Posterior vena cava (tissue), 2 donors: ENCODE measurements at regions of chr12 and their contacts with region 1.

Region 1: GRCh38 chr12:109995686-109996482 is at the start of gene GIT2:
- DNase-seq: peak; percentile 98
- total RNA-seq, gene GIT2: 44.9 to 48.0 TPM

Region 2: GRCh38 chr12:109504068-109504467 is 491.8 kb before region 1 on chr12:
- intact Hi-C with region 1: loop called in 1 of 2 experiments (anchors 5 kb)
- DNase-seq: no peak

Region 3: DNA sequence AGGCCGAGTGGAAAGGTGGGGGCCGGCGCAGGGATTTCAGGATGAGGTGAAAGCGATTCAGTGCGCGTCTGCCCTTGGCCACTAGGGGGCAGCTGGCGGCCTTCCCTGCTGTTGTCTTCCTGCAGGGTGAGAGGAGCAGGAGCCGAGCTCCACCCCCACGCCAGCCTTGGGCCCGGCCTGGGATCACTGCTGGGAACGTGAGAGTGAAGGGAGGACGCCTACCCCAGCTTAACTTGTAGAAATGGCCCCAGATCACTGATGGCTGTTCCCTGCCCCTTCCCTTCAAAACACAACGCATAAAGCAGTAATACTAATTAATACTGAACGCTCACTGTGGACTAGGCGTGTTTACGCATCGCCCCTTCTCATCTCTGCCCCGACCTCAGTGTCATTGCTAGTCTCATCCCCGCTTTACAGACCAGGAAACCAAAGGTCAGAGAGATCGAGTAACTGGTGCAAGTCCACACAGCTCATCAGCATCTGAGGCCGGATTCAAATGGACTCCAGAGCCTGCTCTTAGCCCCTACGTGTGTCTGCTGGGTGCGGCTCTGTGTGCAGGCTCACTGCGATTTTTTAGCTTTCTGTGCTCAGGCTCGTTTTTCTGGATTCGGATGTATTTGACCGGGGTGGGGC is 398.0 kb before region 1 on chr12:
- intact Hi-C with region 1: no loop called
- DNase-seq: peak; percentile 95